ENCODE measurements at regions of chr11 and their contacts with region 1.

Region 1: GRCh38 chr11:75896843-75897419 is 81.9 kb downstream of the UVRAG start:
- DNase-seq: no peak
- H3K4me3 ChIP-seq: no peak overlapping the region
- H3K27ac ChIP-seq: no peak overlapping the region
- H3K4me1 ChIP-seq: peaks cover 0 to 5% of the 10 kb centered on the region in 2 donors
- H3K27me3 ChIP-seq: no peaks in the 10 kb centered on the region
- CTCF ChIP-seq: peak; percentile 67 to 74 (median 68)

Region 2: DNA sequence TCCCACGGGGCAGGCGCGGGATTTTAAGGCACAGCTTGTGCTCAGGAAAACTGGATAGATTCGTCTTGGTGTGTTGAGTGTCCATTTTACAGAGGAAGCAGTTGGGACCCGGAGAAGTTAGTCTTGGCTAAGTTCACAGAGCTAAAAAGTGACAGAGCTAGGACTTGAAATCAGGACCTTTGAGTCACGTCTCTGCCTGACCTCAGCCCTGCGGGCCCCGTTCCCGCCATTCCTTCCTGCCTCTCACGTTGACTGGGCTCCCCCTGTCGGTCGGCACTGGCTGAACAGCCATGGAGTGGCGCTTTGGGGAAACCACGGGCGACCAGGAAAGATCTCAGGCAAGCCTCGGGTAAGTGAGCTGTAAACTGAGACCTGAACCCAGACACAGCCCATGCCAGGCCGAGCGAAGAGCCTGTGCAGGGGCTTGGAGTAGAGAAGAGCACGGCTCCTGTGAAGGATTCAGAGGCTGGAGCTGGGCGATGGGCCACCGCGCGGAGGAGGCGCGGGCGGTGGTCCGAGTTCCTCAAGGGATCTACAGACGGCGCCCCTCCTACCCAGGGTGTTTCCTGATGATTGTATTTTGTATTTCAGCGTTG is 255.3 kb after region 1 on chr11:
- intact Hi-C with region 1: loop called (anchors 1 kb)
- DNase-seq: peak; percentile 62 to 95
- H3K4me3 ChIP-seq: peak overlapping the region; percentile 46 to 59
- H3K27ac ChIP-seq: no peak overlapping the region
- H3K4me1 ChIP-seq: no peaks in the 10 kb centered on the region
- H3K27me3 ChIP-seq: no peaks in the 10 kb centered on the region
- CTCF ChIP-seq: peak; percentile 96 to 98 (median 96)

Region 3: GRCh38 chr11:76318744-76319384 is 421.9 kb after region 1 on chr11:
- intact Hi-C with region 1: loop called (anchors 2 kb)
- DNase-seq: peak in 1 of 2 donors; percentile 87
- H3K4me3 ChIP-seq: no peak overlapping the region
- H3K27ac ChIP-seq: no peak overlapping the region
- H3K4me1 ChIP-seq: no peaks in the 10 kb centered on the region
- H3K27me3 ChIP-seq: no peaks in the 10 kb centered on the region
- CTCF ChIP-seq: peak; percentile 83 to 93 (median 90)